Breast epithelium (tissue), 4 donors: ENCODE measurements at regions of chr14 and their contacts with region 1.

Region 1: DNA sequence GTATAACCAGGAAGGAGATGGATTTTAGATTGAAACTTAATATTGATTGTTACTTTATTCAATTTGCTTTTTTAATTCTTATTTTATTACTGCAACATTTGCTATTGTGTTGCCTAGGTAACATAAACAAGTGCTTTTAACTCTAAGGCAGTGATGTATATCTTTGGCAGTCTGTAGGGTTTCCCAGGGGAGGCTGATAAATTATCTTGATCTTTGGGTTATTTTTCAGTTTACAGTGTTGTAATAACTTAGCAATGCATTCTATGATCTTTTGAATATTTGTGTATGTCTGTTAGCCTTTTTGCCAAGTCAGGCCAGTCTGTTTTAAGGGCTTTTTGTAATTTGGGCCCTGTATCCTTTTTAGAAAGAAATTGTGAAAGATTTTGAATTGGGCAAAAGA is 7.8 kb upstream of the DTD2 start:
- DNase-seq: no peak
- H3K4me3 ChIP-seq: no peak overlapping the region
- H3K27ac ChIP-seq: no peak overlapping the region
- H3K4me1 ChIP-seq: no peaks in the 10 kb centered on the region
- H3K27me3 ChIP-seq: no peaks in the 10 kb centered on the region
- CTCF ChIP-seq: no peak
- POLR2A ChIP-seq: no peak

Region 2: DNA sequence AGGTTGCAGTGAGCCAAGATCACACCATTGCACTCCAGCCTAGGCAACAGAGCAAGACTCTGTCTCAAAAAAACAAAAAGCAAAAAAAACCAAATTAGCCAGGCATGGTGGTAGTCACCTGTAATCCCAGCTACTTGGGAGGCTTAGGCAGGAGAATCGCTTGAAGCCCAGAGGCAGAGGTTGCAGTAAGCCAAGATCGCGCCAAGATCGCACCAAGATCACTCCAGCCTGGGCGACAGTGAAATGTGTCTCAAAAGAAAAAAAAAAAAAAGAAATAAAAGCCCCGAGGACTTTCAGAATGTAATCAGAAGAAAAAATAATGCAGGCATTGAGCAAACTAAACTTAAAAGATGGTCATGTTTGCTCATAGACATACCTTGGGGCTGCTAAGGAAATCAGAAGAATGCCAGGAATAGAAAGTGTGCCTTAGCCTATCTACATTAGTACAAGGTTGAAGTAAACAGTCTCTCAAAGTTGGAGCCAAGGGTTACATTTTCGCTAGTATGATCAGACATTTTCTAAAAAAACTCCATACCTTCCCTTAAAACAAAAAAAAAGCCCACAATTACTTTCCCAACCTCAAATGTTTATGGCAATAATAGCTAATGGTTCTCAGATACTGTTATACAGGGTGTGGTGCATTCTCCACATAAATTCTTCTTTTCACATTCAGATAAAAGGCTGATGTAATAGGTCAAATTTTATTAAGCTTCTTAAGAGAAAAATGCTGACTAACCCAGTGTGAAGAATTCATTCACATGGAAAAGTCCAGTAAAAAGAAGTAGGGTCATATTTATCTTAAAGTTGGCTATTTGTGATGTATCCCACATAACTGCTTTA is 23.6 kb before region 1 on chr14:
- intact Hi-C with region 1: loop called (anchors 2 kb)
- DNase-seq: no peak
- H3K4me3 ChIP-seq: no peak overlapping the region
- H3K27ac ChIP-seq: no peak overlapping the region
- H3K4me1 ChIP-seq: no peaks in the 10 kb centered on the region
- H3K27me3 ChIP-seq: no peaks in the 10 kb centered on the region
- CTCF ChIP-seq: no peak
- POLR2A ChIP-seq: no peak

Region 3: GRCh38 chr14:31530136-31530535 is 65.0 kb after region 1 on chr14:
- intact Hi-C with region 1: no loop called
- DNase-seq: no peak
- H3K4me3 ChIP-seq: no peak overlapping the region
- H3K27ac ChIP-seq: no peak overlapping the region
- H3K4me1 ChIP-seq: no peaks in the 10 kb centered on the region
- H3K27me3 ChIP-seq: no peaks in the 10 kb centered on the region
- CTCF ChIP-seq: no peak
- POLR2A ChIP-seq: no peak

Region 4: GRCh38 chr14:32683679-32684078 is 1218.6 kb after region 1 on chr14:
- intact Hi-C with region 1: loop called (anchors 5 kb)
- DNase-seq: no peak
- H3K4me3 ChIP-seq: no peak overlapping the region
- H3K27ac ChIP-seq: no peak overlapping the region
- H3K4me1 ChIP-seq: no peaks in the 10 kb centered on the region
- H3K27me3 ChIP-seq: no peaks in the 10 kb centered on the region
- CTCF ChIP-seq: no peak
- POLR2A ChIP-seq: no peak